ENCODE measurements at regions of chr17 and their contacts with region 1.

Region 1: GRCh38 chr17:48610282-48611211 is at the start of gene HOXB7:
- DNase-seq: peak; percentile 75
- ATAC-seq: peak; percentile 47
- H3K4me3 Mint-ChIP-seq: peak within 1 kb of the TSS; percentile 89
- H3K27ac Mint-ChIP-seq: peak within 1 kb of the TSS; percentile 71
- H3K4me1 Mint-ChIP-seq: peaks cover 36% of the 10 kb centered on the region
- H3K27me3 Mint-ChIP-seq: peaks cover 70% of the 10 kb centered on the region
- total RNA-seq, gene HOXB7: 0.87 to 0.91 TPM

Region 2: DNA sequence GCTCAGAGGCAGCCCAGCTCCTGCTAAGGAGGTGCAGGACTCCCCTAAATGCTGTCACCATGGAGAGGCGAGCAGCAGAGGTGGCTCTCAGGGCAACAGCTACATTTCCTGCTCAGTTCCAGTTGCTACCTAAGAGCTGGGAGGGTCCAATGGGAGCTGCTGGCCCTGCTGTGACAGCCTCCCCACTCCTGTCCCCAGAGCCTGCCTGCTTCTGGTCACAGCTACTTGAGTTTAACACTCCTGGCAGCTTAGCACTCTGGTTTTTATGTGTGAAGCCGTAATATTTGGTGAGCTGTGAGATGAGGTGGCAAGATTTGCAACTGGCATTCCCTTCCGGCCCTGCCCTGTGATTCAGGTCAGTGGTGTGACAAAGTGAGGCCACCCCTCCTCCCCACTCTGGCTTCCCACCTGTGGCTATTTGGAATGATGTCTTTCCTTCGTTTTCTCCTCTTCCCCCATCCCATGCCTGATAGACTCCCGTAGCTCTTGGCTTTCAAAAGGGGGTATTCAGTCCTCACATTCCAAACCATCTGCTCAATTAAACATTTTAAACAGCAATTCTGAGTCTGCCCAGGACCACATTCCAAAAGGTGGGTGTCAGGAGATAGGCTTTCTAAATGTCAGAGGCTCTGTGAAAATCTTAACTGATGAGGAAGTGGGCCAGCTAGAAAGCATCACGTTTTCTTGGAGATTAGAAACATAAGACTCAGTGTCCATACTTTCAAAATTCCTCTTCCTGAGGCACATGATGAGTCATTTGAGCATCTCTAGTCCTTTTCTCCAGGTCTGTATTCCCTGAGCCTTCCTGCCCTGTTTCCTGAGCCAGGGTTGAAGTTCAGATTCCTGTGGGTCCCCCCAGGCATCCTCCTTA is 137.9 kb before region 1 on chr17:
- CTCF ChIA-PET with region 1: no interaction called
- POLR2A ChIA-PET with region 1: no interaction called
- DNase-seq: no peak
- ATAC-seq: peak; percentile 58
- H3K4me3 Mint-ChIP-seq: no peak overlapping the region
- H3K27ac Mint-ChIP-seq: no peak overlapping the region
- H3K4me1 Mint-ChIP-seq: peaks cover 14% of the 10 kb centered on the region
- H3K27me3 Mint-ChIP-seq: peaks cover 14% of the 10 kb centered on the region

Region 3: DNA sequence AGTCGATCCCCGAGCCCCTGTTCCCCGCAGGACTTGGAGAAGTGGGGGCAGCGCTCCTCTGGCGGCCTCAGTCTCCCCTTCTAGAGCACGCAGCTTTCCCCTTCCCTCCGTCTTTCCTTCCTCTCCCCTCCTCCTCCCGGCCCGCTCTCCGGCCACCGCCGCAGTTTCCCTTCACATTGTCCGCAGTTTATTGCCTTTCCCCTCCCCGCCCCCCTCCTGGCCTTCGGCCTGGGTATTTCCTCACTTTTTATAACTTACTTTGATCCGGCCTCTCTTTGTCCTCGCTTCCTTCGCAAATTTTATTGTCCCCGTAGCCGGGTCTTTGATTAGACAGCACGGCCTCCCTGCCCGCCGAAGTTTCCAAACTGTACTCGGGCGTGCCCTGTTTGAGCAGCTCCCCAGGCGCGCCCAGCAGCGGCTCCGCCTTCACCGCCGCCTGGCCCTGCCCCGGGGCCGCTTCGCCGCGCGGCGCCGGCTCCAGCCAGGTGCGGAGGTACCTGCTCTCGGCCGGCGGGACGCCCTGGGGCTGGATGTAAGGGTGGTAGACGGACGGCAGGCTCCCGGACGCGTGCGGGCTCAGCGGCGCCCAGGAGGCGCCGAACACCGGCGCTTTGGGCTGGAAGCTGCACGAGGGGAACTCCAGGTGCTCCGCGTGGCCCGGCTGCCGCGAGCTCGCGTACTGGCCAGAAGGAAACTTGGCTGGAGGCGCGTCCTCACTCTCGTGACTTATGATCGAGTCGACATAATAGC is 15.1 kb after region 1 on chr17:
- CTCF ChIA-PET with region 1: interaction called, 11 read pairs
- POLR2A ChIA-PET with region 1: no interaction called
- DNase-seq: peak; percentile 42
- ATAC-seq: peak; percentile 78
- H3K4me3 Mint-ChIP-seq: peak overlapping the region; percentile 73
- H3K27ac Mint-ChIP-seq: no peak overlapping the region
- H3K4me1 Mint-ChIP-seq: peaks cover 18% of the 10 kb centered on the region
- H3K27me3 Mint-ChIP-seq: peaks cover 81% of the 10 kb centered on the region

Region 4: GRCh38 chr17:48643264-48644012 is 32.9 kb after region 1 on chr17:
- CTCF ChIA-PET with region 1: no interaction called
- POLR2A ChIA-PET with region 1: no interaction called
- DNase-seq: no peak
- ATAC-seq: no peak
- H3K4me3 Mint-ChIP-seq: no peak overlapping the region
- H3K27ac Mint-ChIP-seq: no peak overlapping the region
- H3K4me1 Mint-ChIP-seq: peaks cover 33% of the 10 kb centered on the region
- H3K27me3 Mint-ChIP-seq: peaks cover 85% of the 10 kb centered on the region